Right ventricle myocardium inferior (tissue), 1 donor: ENCODE measurements at regions of chr1 and their contacts with region 1.

Region 1: GRCh38 chr1:155001675-155002463 is 733 bp upstream of the ZBTB7B start:
- DNase-seq: peak; percentile 100
- ATAC-seq: peak; percentile 88

Region 2: DNA sequence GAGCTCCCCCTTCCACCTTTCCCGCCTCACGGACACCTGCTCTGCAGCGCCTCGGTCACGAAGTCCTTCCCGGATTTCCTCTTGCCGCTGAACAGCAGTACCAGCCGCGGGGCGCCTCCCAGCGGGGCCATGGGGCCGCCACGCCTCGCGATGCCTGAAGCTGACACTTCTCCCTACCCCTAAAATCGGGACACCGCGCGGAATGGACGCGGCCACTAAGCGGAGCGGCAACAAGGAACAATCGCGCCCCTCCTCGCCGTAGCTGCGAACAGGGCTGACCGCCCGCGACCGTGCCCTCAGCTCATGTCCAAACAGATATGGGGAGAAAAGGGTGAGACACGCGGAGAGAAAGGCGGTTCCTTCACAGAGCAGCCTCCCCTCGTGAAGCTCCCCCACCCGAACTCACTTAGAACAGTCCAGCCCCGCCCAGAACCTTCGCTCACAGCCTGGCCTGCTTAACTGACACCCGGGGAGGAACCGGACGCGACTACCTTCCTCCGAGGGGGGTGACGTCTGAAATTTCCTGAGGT is 65.2 kb before region 1 on chr1 and contains the start of gene PMVK:
- intact Hi-C with region 1: loop called (anchors 2 kb)
- DNase-seq: peak; percentile 97
- ATAC-seq: peak; percentile 96
- total RNA-seq, gene PMVK: 71.1 TPM

Region 3: GRCh38 chr1:154961497-154962262 is 40.2 kb before region 1 on chr1 and contains the start of gene PYGO2:
- intact Hi-C with region 1: loop called (anchors 5 kb)
- DNase-seq: peak; percentile 93
- ATAC-seq: peak; percentile 87
- total RNA-seq, gene PYGO2: 16.0 TPM

Region 4: GRCh38 chr1:154974063-154974807 is 27.6 kb before region 1 on chr1 and contains the start of gene CKS1B:
- intact Hi-C with region 1: loop called (anchors 2 kb)
- DNase-seq: peak; percentile 98
- ATAC-seq: peak; percentile 89
- total RNA-seq, gene CKS1B: 22.2 TPM

Region 5: GRCh38 chr1:154982897-154983648 is 18.8 kb before region 1 on chr1 and contains the start of gene FLAD1:
- intact Hi-C with region 1: loop called (anchors 2 kb)
- DNase-seq: peak; percentile 96
- ATAC-seq: peak; percentile 100
- total RNA-seq, gene FLAD1: 30.8 TPM

Region 6: GRCh38 chr1:155017041-155017945 is 15.4 kb after region 1 on chr1:
- intact Hi-C with region 1: loop called (anchors 1 kb)
- DNase-seq: peak; percentile 95
- ATAC-seq: peak; percentile 93

Region 7: GRCh38 chr1:155063550-155064110 is 61.8 kb after region 1 on chr1 and contains the start of gene EFNA4:
- intact Hi-C with region 1: no loop called
- DNase-seq: peak; percentile 89
- ATAC-seq: peak; percentile 92
- total RNA-seq, gene EFNA4: 2.1 TPM